Gastrocnemius medialis (tissue), 4 donors: ENCODE measurements at regions of chr5 and their contacts with region 1.

Region 1: DNA sequence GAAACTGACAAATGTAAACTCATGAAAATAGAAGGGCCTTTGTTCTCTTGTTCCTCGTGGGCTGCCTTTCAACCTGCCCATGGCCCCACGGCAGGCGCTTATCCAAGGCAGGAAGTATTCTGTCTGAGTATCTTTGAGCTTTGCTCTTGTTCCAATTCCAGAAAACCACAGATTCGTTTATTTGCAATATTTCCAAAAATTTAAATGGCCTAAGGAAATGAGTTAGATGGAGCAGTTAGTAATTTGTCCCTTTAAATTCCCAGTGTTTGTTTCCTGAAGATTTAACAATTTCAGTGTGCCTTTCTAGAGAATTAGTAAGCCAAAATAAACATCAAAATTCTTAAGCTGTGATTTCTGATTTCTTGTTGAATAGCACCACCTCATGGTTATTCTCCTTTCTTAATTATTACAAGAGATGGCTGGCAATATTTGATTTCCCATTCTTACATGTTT is 299.4 kb upstream of the RASA1 start:
- DNase-seq: no peak
- ATAC-seq: no peak
- H3K4me3 ChIP-seq: no peak overlapping the region
- H3K27ac ChIP-seq: no peak overlapping the region
- H3K4me1 ChIP-seq: no peaks in the 10 kb centered on the region
- H3K27me3 ChIP-seq: no peaks in the 10 kb centered on the region
- CTCF ChIP-seq: peak in 4 of 5 experiments; percentile 28 to 30 (median 30)
- POLR2A ChIP-seq: no peak

Region 2: GRCh38 chr5:86880785-86881492 is 87.4 kb before region 1 on chr5:
- in situ Hi-C with region 1: loop called in 1 of 4 experiments (anchors 10 kb)
- intact Hi-C with region 1: no loop called
- DNase-seq: no peak
- ATAC-seq: peak; percentile 44 to 52
- H3K4me3 ChIP-seq: no peak overlapping the region
- H3K27ac ChIP-seq: no peak overlapping the region
- H3K4me1 ChIP-seq: no peaks in the 10 kb centered on the region
- H3K27me3 ChIP-seq: no peaks in the 10 kb centered on the region
- CTCF ChIP-seq: peak; percentile 30 to 59 (median 36)
- POLR2A ChIP-seq: no peak

Region 3: DNA sequence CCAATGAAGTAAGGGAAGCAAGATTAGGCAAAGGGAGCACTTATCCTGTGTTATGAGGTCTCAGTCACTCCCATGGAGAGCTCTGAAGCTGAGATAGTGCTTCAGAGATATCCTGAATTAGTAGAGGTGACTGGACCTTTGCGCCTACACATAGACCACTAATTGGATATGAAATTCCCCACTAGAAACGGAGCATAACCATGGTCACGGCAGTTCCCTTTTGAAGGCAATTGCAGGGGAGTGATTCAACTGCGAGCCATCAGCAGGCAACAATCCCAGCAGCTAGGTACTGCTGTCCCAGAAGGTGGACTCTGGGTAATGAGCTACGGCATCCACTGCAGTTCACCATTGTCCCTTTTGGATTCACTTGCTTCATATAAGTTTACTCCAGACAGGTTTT is 31.6 kb after region 1 on chr5:
- in situ Hi-C with region 1: no loop called
- intact Hi-C with region 1: no loop called
- DNase-seq: no peak
- ATAC-seq: no peak
- H3K4me3 ChIP-seq: no peak overlapping the region
- H3K27ac ChIP-seq: no peak overlapping the region
- H3K4me1 ChIP-seq: no peaks in the 10 kb centered on the region
- H3K27me3 ChIP-seq: no peaks in the 10 kb centered on the region
- CTCF ChIP-seq: no peak
- POLR2A ChIP-seq: no peak

Region 4: GRCh38 chr5:87010736-87011135 is 42.4 kb after region 1 on chr5:
- in situ Hi-C with region 1: no loop called
- intact Hi-C with region 1: loop called (anchors 5 kb)
- DNase-seq: no peak
- ATAC-seq: no peak
- H3K4me3 ChIP-seq: no peak overlapping the region
- H3K27ac ChIP-seq: no peak overlapping the region
- H3K4me1 ChIP-seq: no peaks in the 10 kb centered on the region
- H3K27me3 ChIP-seq: no peaks in the 10 kb centered on the region
- CTCF ChIP-seq: no peak
- POLR2A ChIP-seq: no peak

Region 5: GRCh38 chr5:87151547-87151946 is 183.2 kb after region 1 on chr5:
- in situ Hi-C with region 1: no loop called
- intact Hi-C with region 1: no loop called
- DNase-seq: no peak
- ATAC-seq: no peak
- H3K4me3 ChIP-seq: no peak overlapping the region
- H3K27ac ChIP-seq: no peak overlapping the region
- H3K4me1 ChIP-seq: no peaks in the 10 kb centered on the region
- H3K27me3 ChIP-seq: no peaks in the 10 kb centered on the region
- CTCF ChIP-seq: no peak
- POLR2A ChIP-seq: no peak